ENCODE measurements at regions of chr5 and their contacts with region 1.

Region 1: GRCh38 chr5:7897014-7897632 is 28.2 kb downstream of the MTRR start:
- H3K4me3 ChIP-seq: no peak overlapping the region
- H3K27ac ChIP-seq: no peak overlapping the region
- H3K4me1 ChIP-seq: no peaks in the 10 kb centered on the region
- CTCF ChIP-seq: no peak

Region 2: GRCh38 chr5:7770436-7770835 is 126.7 kb before region 1 on chr5:
- CTCF ChIA-PET with region 1: no interaction called
- POLR2A ChIA-PET with region 1: no interaction called
- H3K4me3 ChIP-seq: no peak overlapping the region
- H3K27ac ChIP-seq: no peak overlapping the region
- H3K4me1 ChIP-seq: no peaks in the 10 kb centered on the region
- CTCF ChIP-seq: no peak

Region 3: DNA sequence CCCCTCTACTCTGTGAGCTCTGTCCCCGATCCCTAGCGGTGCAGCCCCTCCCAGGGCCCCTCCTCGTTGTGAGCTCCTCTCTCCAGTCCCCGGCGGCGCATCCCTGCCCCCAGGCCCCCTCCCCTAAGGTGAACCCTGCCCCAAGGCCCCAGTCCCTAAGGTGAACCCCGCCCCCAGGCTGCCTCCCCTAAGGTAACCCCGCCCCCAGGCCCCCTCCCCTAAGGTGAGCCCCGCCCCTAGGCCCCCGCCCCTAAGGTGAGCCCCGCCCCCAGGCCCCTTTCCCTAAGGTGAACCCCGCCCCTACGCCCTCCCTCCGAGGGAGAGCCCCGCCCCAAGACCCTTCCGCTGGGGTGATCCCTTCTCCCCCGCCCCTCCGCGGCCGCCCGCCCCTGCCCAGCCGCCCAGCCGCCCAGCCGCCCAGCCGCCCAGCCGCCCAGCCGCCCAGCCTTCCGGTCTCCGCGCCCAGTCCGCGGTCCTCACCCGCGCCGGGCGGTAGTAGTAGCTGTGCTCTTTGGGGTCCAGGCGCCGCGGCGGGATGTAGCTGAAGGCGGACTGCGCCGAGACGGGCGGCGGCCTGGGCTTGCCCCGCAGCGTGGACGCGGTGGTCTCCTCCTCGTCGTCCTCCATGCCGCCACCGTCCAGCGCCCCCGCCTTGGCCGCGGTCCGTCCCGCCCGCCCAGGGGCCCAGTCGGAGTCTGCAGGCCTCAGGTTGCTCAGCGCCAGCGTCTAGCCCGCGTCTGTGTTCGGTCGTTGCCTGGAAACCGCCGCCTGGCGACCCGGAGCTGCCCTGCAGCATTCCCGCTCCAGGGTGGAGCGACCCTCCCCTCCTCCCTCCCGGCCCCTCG is 46.5 kb before region 1 on chr5 and contains the start of gene CFAP90:
- CTCF ChIA-PET with region 1: no interaction called
- POLR2A ChIA-PET with region 1: no interaction called
- H3K4me3 ChIP-seq: peak within 1 kb of the TSS; percentile 65
- H3K27ac ChIP-seq: no peak within 1 kb of the TSS; the same call in 1 of the 2 replicates
- H3K4me1 ChIP-seq: no peaks in the 10 kb centered on the region
- CTCF ChIP-seq: peak; percentile 68

Region 4: DNA sequence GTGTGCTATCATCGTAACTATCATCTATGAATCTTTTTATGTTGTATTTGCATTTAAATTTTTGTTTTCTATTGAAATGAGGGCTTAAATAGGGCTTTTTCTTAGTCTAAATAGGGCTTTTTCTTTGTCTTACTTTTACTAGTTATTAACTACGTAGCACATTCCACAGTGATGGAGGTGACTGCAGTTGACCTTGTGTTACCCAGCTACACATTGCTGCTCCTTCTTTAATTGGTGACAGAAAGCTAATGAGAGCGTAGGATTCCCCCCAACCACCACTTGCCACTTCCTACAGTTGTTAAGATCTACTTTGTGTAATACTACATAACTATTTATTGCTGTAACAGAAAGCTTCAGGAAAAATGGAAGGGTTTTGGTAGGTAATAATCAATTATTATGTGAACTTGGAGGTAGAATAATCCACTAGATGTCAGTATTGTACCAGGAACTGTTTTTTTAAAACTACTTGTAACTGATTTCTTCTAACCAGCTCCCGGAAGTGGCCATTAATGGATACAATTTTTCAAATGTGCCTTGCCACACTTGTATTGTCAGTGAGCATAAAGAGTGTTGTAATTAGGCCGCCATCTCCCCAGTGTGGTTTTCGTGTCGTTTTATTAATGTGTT is 10.2 kb before region 1 on chr5:
- CTCF ChIA-PET with region 1: interaction called, 12 read pairs
- POLR2A ChIA-PET with region 1: no interaction called
- H3K4me3 ChIP-seq: no peak overlapping the region
- H3K27ac ChIP-seq: no peak overlapping the region
- H3K4me1 ChIP-seq: no peaks in the 10 kb centered on the region
- CTCF ChIP-seq: 0 out of 2 replicates have a peak, but pooled peaks have one; percentile 11

Region 5: GRCh38 chr5:8060953-8061429 is 163.9 kb after region 1 on chr5:
- CTCF ChIA-PET with region 1: no interaction called
- POLR2A ChIA-PET with region 1: no interaction called
- H3K4me3 ChIP-seq: no peak overlapping the region
- H3K27ac ChIP-seq: no peak overlapping the region
- H3K4me1 ChIP-seq: no peaks in the 10 kb centered on the region
- CTCF ChIP-seq: no peak